Mammary epithelial cell (primary cell): ENCODE measurements at regions of chr5 and their contacts with region 1.

Region 1: DNA sequence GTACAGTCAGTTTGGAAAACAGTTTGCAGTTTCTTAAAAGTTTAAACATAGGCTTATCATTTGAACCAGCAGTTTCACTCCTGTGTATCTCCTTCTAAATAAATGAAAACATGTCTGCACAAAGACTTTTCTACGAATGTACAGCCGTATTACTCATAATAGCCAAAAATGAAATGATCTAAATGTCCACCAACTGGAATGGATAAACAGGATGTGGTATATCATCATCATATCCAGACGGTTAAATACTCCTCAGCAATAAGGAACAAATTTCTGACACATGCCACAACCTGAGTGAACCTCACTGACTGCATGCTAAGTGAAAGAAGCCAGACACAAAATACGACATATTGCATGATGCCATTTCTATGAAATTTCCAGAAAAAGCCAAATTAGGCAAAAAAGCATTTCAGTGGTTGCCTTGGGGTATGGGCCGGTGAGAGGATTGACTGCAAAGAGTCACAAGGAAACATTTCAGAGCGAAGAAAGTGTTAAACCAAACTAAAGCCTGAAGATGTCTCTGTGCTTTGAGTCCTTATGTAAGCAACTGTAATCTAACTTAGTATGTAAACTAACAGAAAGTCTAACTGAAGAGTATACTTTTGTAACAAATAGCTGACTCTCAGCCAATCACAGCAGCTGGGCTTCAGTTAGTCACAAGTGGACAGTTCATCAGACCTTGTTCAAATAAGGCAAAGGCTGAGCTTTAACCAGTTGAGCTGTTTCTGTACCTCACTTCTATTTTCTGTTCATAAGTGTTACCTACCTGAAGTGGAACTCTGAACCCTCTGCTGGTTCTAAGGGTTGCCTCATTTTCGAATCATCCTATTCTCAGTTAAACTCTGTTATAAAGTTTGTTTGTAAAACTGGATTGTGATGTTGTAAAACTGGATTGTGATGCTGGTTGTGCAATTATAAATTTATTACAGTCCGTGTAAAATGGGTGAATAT is 65.2 kb downstream of the TRIO start:
- DNase-seq: peak; percentile 90
- H3K4me3 ChIP-seq: peak overlapping the region in 2 of 3 experiments; percentile 10 to 30
- H3K27ac ChIP-seq: peak overlapping the region; percentile 91
- H3K4me1 ChIP-seq: peaks cover 86% of the 10 kb centered on the region
- H3K27me3 ChIP-seq: no peaks in the 10 kb centered on the region
- CTCF ChIP-seq: no peak

Region 2: GRCh38 chr5:13987843-13988464 is 220.4 kb before region 1 on chr5:
- CTCF ChIA-PET with region 1: interaction called, 5 read pairs
- dilution Hi-C with region 1: no loop called
- in situ Hi-C with region 1: no loop called
- intact Hi-C with region 1: loop called (anchors 5 kb)
- DNase-seq: peak; percentile 49
- H3K4me3 ChIP-seq: no peak overlapping the region
- H3K27ac ChIP-seq: no peak overlapping the region
- H3K4me1 ChIP-seq: peaks cover 21% of the 10 kb centered on the region
- H3K27me3 ChIP-seq: no peaks in the 10 kb centered on the region
- CTCF ChIP-seq: peak; percentile 86 to 91

Region 3: DNA sequence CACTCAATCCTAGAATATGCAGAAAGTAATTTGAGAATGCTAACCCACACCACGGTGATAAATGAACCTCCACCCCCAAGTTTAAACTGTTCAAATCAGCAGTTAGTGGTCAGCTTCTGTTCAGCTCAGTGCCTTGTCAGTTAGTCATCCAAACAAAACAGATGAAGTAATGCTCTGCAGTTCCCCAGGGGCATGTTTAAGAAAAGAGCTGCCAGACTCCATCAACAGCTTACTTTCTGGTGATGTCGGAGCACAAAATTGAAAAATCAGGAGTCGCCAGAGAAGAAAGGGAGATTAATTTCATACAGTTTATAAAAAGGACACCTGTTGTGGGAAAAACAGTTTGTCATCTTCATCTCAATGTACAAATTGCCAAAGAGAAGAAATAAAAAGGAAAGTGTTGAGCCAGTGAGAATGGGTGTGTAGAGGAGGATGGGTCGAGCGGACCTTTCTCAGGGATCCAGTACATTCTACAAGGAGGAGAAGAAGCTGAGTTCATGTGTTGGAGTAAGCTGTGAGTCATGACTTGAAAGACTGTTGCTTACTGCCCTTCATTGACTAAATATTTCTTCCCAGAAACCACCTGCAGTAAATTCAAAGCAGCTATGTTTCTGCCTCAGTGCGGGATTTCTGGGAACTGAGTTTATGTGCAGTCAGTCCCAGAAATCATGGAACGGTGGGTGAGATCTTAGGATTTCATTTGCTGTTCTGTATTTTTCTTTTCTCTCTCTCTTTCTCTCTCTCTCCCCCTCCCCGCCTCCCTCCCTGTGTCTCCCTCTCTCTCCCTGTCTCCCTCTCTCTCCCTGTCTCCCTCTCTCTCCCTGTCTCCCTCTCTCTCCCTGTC is 51.5 kb before region 1 on chr5:
- CTCF ChIA-PET with region 1: no interaction called
- dilution Hi-C with region 1: no loop called
- in situ Hi-C with region 1: loop called in 1 of 2 experiments (anchors 10 kb)
- intact Hi-C with region 1: loop called (anchors 1 kb)
- DNase-seq: peak; percentile 94
- H3K4me3 ChIP-seq: peak overlapping the region in 2 of 3 experiments; percentile 16 to 33
- H3K27ac ChIP-seq: peak overlapping the region; percentile 85
- H3K4me1 ChIP-seq: peaks cover 47% of the 10 kb centered on the region
- H3K27me3 ChIP-seq: no peaks in the 10 kb centered on the region
- CTCF ChIP-seq: no peak

Region 4: DNA sequence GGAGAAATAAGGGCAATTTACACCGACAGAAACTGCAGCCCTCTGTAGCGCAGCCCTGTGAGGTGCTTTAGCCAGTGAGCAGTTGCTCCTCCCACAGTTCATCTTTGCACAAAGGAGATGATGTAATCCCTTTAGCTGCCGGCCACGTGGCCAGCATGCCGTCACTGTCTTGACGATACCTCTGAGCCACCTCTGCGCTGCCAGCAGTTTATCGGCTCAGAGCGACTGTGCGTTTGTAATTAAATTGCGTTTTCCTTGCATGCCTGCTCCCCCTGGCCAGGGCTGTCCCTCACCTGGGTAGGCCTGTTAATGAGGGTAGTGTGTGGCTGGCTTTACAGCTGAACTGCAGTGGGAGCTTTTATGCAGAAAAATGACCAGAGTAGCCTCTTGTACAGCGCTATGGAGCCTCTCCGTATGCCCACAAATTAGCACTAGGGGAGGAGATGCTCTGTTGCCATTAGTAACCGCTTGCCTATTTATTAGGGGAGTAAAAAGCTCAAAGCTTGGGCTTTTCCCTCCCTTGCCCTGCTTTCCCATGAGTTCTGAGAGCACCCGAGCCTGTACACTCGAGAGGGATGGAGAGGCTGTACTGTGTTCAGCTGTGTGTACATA is 41.8 kb after region 1 on chr5:
- CTCF ChIA-PET with region 1: no interaction called
- dilution Hi-C with region 1: no loop called
- in situ Hi-C with region 1: no loop called
- intact Hi-C with region 1: loop called (anchors 1 kb)
- DNase-seq: peak; percentile 68
- H3K4me3 ChIP-seq: no peak overlapping the region
- H3K27ac ChIP-seq: no peak overlapping the region
- H3K4me1 ChIP-seq: peaks cover 9% of the 10 kb centered on the region
- H3K27me3 ChIP-seq: no peaks in the 10 kb centered on the region
- CTCF ChIP-seq: no peak

Region 5: GRCh38 chr5:14270209-14270702 is 61.9 kb after region 1 on chr5:
- CTCF ChIA-PET with region 1: interaction called, 10 read pairs
- dilution Hi-C with region 1: no loop called
- in situ Hi-C with region 1: no loop called
- intact Hi-C with region 1: loop called (anchors 1 kb)
- DNase-seq: peak; percentile 43
- H3K4me3 ChIP-seq: no peak overlapping the region
- H3K27ac ChIP-seq: peak overlapping the region; percentile 95
- H3K4me1 ChIP-seq: peaks cover 55% of the 10 kb centered on the region
- H3K27me3 ChIP-seq: no peaks in the 10 kb centered on the region
- CTCF ChIP-seq: peak; percentile 75 to 84